ENCODE measurements at regions of chr16 and their contacts with region 1.

Region 1: GRCh38 chr16:87778830-87779579 is 13.2 kb upstream of the KLHDC4 start:
- DNase-seq: peak; percentile 84 to 96
- H3K4me3 ChIP-seq: peak overlapping the region; percentile 30; the same call in 1 of the 2 replicates
- H3K27ac ChIP-seq: peak overlapping the region; percentile 89
- H3K4me1 ChIP-seq: peaks cover 19% of the 10 kb centered on the region
- H3K27me3 ChIP-seq: no peaks in the 10 kb centered on the region
- CTCF ChIP-seq: peak; percentile 88

Region 2: GRCh38 chr16:87571136-87571867 is 207.7 kb before region 1 on chr16:
- CTCF ChIA-PET with region 1: no interaction called
- POLR2A ChIA-PET with region 1: no interaction called
- intact Hi-C with region 1: no loop called
- DNase-seq: peak; percentile 36 to 58
- H3K4me3 ChIP-seq: no peak overlapping the region
- H3K27ac ChIP-seq: no peak overlapping the region
- H3K4me1 ChIP-seq: no peaks in the 10 kb centered on the region
- H3K27me3 ChIP-seq: peaks cover 72% of the 10 kb centered on the region
- CTCF ChIP-seq: peak; percentile 63

Region 3: DNA sequence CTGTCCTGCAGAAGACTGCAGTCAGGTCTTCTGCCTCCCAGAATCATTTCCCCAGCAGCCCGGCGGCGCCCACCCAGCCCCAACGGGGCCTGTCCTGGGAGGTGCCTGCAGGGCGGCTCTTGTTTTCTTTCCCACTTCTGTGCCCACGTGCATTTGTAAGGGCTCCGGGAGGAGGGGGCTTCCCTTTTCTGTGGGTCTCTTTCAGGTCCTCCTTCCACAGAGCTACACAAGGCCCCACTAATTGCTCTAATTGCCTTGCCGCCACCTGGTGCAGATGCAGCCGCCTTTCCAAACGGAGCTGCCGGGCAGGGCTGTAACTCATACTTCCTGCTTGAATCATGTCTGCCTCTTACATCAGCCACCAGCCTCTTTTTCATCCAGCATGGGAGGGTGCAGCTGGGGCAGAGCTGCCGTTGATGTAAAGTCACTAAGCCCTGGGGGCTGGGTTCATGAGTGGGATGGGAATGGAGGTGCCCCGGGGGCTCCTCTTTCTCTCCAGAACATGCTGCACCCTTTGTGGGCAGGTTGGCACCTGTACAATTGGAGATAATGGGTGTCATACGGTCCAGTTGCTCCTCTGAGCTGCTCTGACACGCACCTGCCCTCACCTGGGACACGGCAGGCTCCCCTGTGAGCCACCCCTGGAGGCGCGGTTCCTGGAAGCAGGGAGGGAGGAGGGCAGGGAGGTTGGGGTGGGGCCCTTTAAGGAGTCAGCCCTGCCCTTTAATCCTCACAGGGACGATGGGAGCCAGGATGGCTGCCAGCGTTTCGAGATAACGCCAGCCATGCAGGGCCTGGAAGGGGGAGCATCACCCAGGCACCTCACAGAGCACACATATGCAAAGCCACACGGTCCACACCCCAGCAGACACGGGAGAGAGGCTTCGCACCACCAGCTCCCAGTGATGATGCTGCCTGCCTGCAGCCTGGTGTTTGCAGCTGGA is 27.9 kb after region 1 on chr16:
- CTCF ChIA-PET with region 1: interaction called, 10 read pairs
- POLR2A ChIA-PET with region 1: interaction called, 9 read pairs
- intact Hi-C with region 1: loop called (anchors 1 kb)
- DNase-seq: peak; percentile 85 to 91
- H3K4me3 ChIP-seq: peak overlapping the region; percentile 71
- H3K27ac ChIP-seq: peak overlapping the region; percentile 95
- H3K4me1 ChIP-seq: peaks cover 23% of the 10 kb centered on the region
- H3K27me3 ChIP-seq: no peaks in the 10 kb centered on the region
- CTCF ChIP-seq: no peak

Region 4: DNA sequence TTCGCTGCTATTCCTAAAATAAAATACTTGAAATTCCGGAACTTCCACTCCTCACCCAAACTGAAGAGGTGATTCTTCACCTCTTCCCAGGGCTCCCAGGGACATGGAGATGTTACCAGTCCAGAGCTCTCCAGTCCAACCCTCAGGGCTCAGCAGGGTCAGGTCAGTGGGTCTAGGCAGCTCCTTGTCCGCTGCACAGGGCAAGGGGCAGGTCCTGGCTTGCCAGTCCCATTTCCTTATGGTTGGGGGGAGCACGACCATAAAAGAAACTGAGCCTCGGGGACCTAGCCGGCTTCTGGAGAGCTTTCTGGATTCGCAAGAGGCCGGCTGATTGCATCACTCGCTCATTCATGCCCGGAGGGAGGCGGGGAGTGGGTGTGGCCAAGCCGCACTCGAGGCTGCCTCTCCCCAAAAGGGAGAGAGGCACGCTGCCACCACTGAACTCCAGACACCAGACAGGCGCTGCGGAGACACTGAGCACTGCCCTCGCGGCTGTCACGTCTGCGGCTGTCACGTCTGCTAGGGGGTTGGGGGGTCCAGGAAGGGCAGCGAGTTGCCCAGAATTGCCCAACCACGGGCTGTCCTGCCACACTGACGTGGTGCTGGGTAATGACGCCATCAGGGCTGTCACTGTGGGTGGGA is 74.5 kb after region 1 on chr16:
- CTCF ChIA-PET with region 1: interaction called, 8 read pairs
- POLR2A ChIA-PET with region 1: no interaction called
- intact Hi-C with region 1: loop called (anchors 1 kb)
- DNase-seq: peak; percentile 89 to 95
- H3K4me3 ChIP-seq: peak overlapping the region; percentile 58
- H3K27ac ChIP-seq: peak overlapping the region; percentile 99
- H3K4me1 ChIP-seq: peaks cover 50% of the 10 kb centered on the region
- H3K27me3 ChIP-seq: no peaks in the 10 kb centered on the region
- CTCF ChIP-seq: no peak

Region 5: GRCh38 chr16:88569985-88570690 is 791.1 kb after region 1 on chr16 and contains the start of gene ZC3H18:
- CTCF ChIA-PET with region 1: no interaction called
- POLR2A ChIA-PET with region 1: interaction called, 3 read pairs
- intact Hi-C with region 1: loop called (anchors 5 kb)
- DNase-seq: peak; percentile 78 to 97
- H3K4me3 ChIP-seq: peak within 1 kb of the TSS; percentile 95
- H3K27ac ChIP-seq: no peak within 1 kb of the TSS
- H3K4me1 ChIP-seq: peaks cover 18% of the 10 kb centered on the region
- H3K27me3 ChIP-seq: no peaks in the 10 kb centered on the region
- CTCF ChIP-seq: no peak
- total RNA-seq, gene ZC3H18: 76.4 and 78.4 TPM in 2 replicates

Measured in PC-9 (cell line).